ENCODE measurements at regions of chr3 and their contacts with region 1.

Region 1: GRCh38 chr3:4493014-4493940 is at the start of gene ITPR1:
- DNase-seq: peak; percentile 97
- H3K4me3 ChIP-seq: peak within 1 kb of the TSS; percentile 56 to 83 (median 78)
- H3K27ac ChIP-seq: peak within 1 kb of the TSS; percentile 64
- H3K4me1 ChIP-seq: peaks cover 23% of the 10 kb centered on the region
- H3K27me3 ChIP-seq: no peaks in the 10 kb centered on the region
- CTCF ChIP-seq: peak in 1 of 2 donors; percentile 0
- total RNA-seq, gene ITPR1: 15.6 to 33.2 TPM

Region 2: GRCh38 chr3:4306860-4307259 is 186.4 kb before region 1 on chr3:
- CTCF ChIA-PET with region 1: no interaction called
- dilution Hi-C with region 1: no loop called
- in situ Hi-C with region 1: no loop called
- intact Hi-C with region 1: loop called (anchors 2 kb)
- DNase-seq: peak; percentile 32
- H3K4me3 ChIP-seq: peak overlapping the region in 1 of 3 experiments; percentile 6
- H3K27ac ChIP-seq: no peak overlapping the region
- H3K4me1 ChIP-seq: peaks cover 27% of the 10 kb centered on the region
- H3K27me3 ChIP-seq: no peaks in the 10 kb centered on the region
- CTCF ChIP-seq: no peak

Region 3: DNA sequence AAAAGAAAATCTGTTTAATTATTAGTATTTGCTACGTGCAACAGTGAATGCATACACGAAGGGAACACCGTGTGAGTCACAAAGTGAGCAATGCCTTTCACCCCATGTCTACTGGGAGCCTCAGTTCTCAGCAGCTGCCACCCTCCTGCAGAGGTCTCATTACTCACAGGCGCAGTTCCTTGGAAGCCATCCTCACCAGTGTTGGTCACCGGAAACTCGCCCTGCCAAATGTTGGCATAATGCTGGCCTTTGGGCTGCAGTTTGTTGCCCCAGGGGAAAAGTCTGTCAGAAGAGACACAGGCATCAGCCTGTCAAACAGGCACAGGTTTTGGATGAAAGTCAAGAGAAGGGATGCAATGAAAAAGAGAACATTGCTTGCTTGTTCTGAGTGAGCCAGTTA is 76.3 kb before region 1 on chr3:
- CTCF ChIA-PET with region 1: no interaction called
- dilution Hi-C with region 1: no loop called
- in situ Hi-C with region 1: no loop called
- intact Hi-C with region 1: loop called (anchors 1 kb)
- DNase-seq: peak; percentile 100
- H3K4me3 ChIP-seq: no peak overlapping the region
- H3K27ac ChIP-seq: peak overlapping the region; percentile 92
- H3K4me1 ChIP-seq: peaks cover 51% of the 10 kb centered on the region
- H3K27me3 ChIP-seq: no peaks in the 10 kb centered on the region
- CTCF ChIP-seq: peak in 1 of 2 donors; percentile 23

Region 4: DNA sequence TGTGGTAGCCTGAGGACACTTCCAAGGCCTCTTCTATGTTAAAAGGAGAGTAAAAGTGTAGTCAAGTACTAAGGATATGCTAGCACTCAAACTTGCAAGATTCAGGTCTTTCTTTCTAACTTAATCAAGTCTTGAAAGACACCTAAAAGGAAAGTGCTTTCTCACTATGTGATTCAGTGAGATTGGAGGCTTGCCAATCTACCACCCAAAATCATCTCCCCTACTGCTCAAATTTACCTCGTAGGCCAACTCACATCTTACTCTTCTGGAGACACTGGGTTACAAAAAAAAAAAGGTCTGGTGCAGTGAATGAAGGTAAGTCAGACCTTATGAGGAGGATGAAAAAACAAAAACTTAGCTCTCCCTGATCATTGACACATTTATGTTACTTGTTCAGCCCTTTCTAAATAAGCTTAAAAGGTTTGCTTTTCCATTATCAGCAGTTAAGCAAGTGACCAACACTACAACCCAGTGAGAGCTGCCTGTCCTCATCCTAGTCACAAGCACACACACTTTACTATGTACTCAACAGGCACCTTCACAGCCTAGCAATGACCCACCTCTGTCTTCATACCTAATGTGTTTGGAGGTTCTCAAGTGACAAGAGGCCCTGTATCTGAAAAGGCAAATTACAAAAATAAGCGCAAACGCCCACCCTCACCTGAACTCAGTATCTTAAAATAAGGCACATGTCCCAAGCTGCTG is 45.8 kb before region 1 on chr3:
- CTCF ChIA-PET with region 1: no interaction called
- dilution Hi-C with region 1: no loop called
- in situ Hi-C with region 1: no loop called
- intact Hi-C with region 1: no loop called
- DNase-seq: no peak
- H3K4me3 ChIP-seq: no peak overlapping the region
- H3K27ac ChIP-seq: no peak overlapping the region
- H3K4me1 ChIP-seq: no peaks in the 10 kb centered on the region
- H3K27me3 ChIP-seq: no peaks in the 10 kb centered on the region
- CTCF ChIP-seq: no peak

Region 5: GRCh38 chr3:4584456-4585249 is 91.4 kb after region 1 on chr3:
- CTCF ChIA-PET with region 1: no interaction called
- dilution Hi-C with region 1: no loop called
- in situ Hi-C with region 1: no loop called
- intact Hi-C with region 1: loop called (anchors 1 kb)
- DNase-seq: peak; percentile 19
- H3K4me3 ChIP-seq: peak overlapping the region; percentile 37 to 50 (median 46)
- H3K27ac ChIP-seq: peak overlapping the region; percentile 49
- H3K4me1 ChIP-seq: peaks cover 61% of the 10 kb centered on the region
- H3K27me3 ChIP-seq: no peaks in the 10 kb centered on the region
- CTCF ChIP-seq: peak in 1 of 2 donors; percentile 39

Region 6: GRCh38 chr3:4986782-4987537 is 493.7 kb after region 1 on chr3:
- CTCF ChIA-PET with region 1: no interaction called
- dilution Hi-C with region 1: no loop called
- in situ Hi-C with region 1: no loop called
- intact Hi-C with region 1: loop called (anchors 10 kb)
- DNase-seq: peak; percentile 99
- H3K4me3 ChIP-seq: peak overlapping the region; percentile 1 to 31 (median 4)
- H3K27ac ChIP-seq: peak overlapping the region; percentile 96
- H3K4me1 ChIP-seq: peaks cover 49% of the 10 kb centered on the region
- H3K27me3 ChIP-seq: no peaks in the 10 kb centered on the region
- CTCF ChIP-seq: no peak

Measured in mammary epithelial cell (primary cell).